Dorsolateral prefrontal cortex (tissue), 120 donors: ENCODE measurements at regions of chr1 and their contacts with region 1.

Region 1: GRCh38 chr1:27772933-27773825 is at the start of gene STX12:
- DNase-seq: peak; percentile 96 to 99 (median 98)
- H3K4me3 ChIP-seq: peak within 1 kb of the TSS; percentile 54 to 100 (median 93)
- H3K27ac ChIP-seq: peak within 1 kb of the TSS; percentile 43 to 97 (median 88)
- H3K27me3 ChIP-seq: no peaks in the 10 kb centered on the region
- CTCF ChIP-seq: peak in 25 of 56 donors; percentile 7 to 52 (median 25)
- total RNA-seq, gene STX12: 52.3 to 114 (median 91.1) TPM

Region 2: DNA sequence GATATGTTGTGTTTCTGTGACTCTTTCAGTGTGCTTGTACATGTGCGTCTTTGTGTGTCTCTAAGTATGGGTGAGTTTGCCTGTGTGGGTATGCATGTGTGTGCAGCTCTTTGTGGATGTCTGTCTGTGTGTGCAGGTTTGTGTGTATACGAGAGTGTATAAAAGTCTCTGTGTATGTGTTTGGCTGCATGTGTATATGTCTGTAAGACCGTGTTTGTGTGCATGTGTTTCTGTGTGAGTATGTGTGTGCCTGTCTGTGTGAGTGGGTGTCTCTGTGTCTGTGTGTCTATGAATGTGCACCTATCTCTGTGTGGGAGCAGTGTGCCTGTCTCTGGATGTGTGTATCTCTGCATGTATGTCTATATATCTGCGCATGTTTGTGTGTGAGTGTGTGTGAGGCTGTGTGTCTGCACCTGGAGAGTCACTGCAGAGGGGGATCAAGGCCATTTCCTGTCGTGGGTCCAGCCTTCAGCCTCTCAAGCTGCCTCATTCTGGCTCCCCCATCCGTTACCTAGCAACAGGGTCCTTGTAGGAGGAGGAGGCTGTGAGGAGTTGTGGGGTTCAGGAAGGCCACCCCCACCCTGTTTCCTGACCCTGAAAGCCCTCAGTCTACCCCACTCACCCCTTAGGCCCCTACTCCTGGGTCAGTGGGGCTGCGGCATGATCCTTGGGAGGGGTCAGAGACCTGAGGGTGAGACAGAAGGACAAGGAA is 148.6 kb before region 1 on chr1:
- intact Hi-C with region 1: no loop called
- DNase-seq: no peak
- H3K4me3 ChIP-seq: no peak overlapping the region
- H3K27ac ChIP-seq: peak overlapping the region in 6 of 59 donors; percentile 3 to 61 (median 44)
- H3K27me3 ChIP-seq: no peaks in the 10 kb centered on the region
- CTCF ChIP-seq: no peak

Region 3: DNA sequence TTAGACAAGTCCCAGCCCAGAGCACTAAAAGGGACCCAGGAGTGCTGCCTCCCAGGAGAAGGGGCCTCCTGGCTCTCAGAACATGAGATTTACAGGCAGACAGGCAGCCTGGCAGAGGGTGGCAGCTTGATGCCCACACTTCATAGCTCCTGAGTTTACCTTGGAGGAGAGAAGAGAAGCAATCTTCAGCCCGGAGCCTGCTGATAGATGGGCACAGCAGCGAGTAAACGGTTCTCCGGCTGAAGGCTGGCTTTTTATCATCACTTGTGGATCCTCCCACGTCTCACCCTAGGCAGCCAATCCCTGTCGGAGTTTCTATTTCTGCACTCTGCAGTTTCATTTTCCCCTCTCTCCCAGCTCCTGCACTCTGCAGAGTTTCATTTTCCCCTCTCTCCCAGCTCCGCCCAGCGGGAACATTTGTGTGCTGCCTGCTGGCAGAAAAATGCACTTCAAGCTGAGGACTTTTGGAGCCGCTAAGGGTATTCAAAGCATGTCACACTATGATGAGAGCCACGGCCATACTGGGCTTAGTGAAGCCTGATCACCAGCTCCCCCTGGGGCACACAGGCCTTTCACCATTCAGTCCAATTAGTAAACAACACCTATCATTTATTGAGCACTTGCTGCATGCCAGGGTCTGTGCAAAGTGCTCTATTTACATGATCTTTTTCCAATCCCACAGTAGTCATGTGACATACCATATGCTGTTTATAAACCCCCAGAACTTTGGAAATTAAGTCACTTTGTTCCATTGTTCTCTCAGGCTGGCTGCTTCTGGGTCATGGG is 101.0 kb before region 1 on chr1 and contains the start of gene IFI6:
- intact Hi-C with region 1: loop called in 1 of 2 experiments (anchors 2 kb)
- DNase-seq: peak; percentile 53 to 96 (median 88)
- H3K4me3 ChIP-seq: peak within 1 kb of the TSS; percentile 37 to 90 (median 67)
- H3K27ac ChIP-seq: peak within 1 kb of the TSS; percentile 77 to 99 (median 92)
- H3K27me3 ChIP-seq: no peaks in the 10 kb centered on the region
- CTCF ChIP-seq: peak in 53 of 56 donors; percentile 16 to 71 (median 52)
- total RNA-seq, gene IFI6: 51.8 to 1,534 (median 96.2) TPM

Region 4: GRCh38 chr1:27725374-27726173 is 47.6 kb before region 1 on chr1 and contains the start of gene FAM76A:
- intact Hi-C with region 1: loop called (anchors 5 kb)
- DNase-seq: peak; percentile 99 to 100 (median 99)
- H3K4me3 ChIP-seq: peak within 1 kb of the TSS; percentile 64 to 98 (median 91)
- H3K27ac ChIP-seq: peak within 1 kb of the TSS; percentile 61 to 97 (median 93)
- H3K27me3 ChIP-seq: no peaks in the 10 kb centered on the region
- CTCF ChIP-seq: peak in 55 of 56 donors; percentile 27 to 89 (median 65)
- total RNA-seq, gene FAM76A: 8.3 to 24.0 (median 15.8) TPM

Region 5: DNA sequence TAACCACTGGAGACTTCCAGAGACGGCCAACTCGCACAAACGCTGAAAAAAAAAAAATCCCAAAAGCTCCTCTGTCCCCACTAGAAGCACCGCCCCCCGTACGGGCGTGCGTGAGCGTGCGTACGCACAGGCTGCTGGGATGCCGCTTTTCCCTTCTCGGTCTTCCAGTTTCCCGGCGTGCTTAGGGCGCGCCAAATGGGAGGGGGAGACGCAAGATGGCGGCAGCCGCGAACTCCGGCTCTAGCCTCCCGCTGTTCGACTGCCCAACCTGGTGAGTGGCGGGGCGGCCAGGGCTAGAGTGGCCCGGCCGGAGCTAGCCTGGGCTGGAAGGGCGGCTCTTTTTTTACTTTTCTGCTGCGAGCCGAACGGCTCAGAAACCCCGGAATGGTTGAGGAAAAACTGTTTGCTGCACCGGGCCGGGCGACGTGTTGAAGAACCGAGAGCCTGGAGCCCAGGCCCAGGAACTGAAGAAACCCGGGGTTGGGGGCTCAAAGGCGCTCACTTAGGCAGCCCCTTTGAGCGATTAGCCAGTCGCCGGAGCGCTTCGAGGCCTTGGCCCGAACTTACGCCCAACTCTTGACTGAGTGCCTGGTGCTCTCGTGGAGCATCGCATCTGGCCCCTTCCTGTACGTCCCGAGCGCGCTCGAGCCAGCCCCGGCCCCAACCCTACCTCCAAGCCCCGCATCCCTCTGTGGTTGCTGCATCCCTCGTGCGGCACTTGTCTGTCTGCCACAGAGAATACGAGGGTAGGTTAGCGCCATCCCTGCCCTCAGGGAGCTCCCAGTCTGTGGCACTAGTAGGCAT is 57.6 kb after region 1 on chr1 and contains the start of gene PPP1R8:
- intact Hi-C with region 1: loop called (anchors 2 kb)
- DNase-seq: peak; percentile 87 to 96 (median 94)
- H3K4me3 ChIP-seq: peak within 1 kb of the TSS; percentile 68 to 100 (median 94)
- H3K27ac ChIP-seq: peak within 1 kb of the TSS; percentile 60 to 98 (median 94)
- H3K27me3 ChIP-seq: no peaks in the 10 kb centered on the region
- CTCF ChIP-seq: peak in 43 of 56 donors; percentile 5 to 67 (median 35)
- total RNA-seq, gene PPP1R8: 26.5 to 47.0 (median 34.4) TPM